Pancreas (tissue), 10 donors: ENCODE measurements at regions of chr13 and their contacts with region 1.

Region 1: GRCh38 chr13:44191504-44192171 is 182.0 kb upstream of the SERP2 start:
- DNase-seq: peak in 3 of 6 donors; percentile 40 to 67 (median 42)
- ATAC-seq: peak; percentile 96 to 99 (median 98)
- H3K4me3 ChIP-seq: no peak overlapping the region
- H3K27ac ChIP-seq: peak overlapping the region in 1 of 4 donors; percentile 22
- H3K4me1 ChIP-seq: peaks cover 0 to 3% (median 0%) of the 10 kb centered on the region in 3 donors
- H3K27me3 ChIP-seq: no peaks in the 10 kb centered on the region
- CTCF ChIP-seq: peak; percentile 40 to 72 (median 56)

Region 2: DNA sequence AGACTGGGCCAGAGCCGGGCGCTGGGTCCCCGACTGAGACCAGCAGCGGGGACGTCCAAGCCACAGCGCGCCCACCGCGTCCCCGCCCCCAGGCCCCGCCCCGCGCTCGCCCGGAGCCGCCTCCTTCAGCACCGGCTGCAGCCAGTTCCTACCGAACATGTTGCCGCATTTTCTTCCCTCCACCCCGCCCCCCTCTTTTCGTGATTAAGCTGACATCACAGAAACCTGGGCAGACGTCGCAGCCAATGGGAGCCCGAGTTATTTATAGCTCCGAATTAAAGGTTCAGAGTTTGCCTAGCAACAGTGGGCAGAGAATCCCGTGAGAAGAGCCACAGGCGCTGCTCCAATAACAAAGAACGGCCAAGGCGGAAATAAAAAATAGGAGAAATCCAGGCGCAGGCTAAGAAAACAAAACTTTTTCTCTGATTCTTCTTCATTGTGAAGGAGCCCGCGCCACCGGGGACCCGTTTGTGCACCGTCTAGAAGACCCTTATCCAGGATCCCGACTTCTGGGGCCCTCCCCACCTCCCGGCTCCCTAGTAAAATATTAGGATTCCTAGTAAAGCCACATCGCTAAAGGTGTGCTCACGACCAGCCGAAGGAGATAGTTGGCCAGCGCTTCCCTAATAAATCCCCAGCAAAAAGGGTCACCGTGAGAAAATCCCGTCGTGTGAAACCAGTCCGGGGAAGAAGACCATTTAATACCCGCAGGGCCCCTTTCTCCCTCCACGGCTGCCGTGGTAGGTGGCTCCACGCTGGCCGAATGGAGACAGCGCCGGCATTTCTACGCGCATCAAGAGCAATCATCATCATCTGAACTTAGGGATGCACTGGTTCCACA is 243.7 kb after region 1 on chr13:
- intact Hi-C with region 1: loop called in 1 of 3 experiments (anchors 10 kb)
- DNase-seq: peak; percentile 95 to 99 (median 97)
- ATAC-seq: peak; percentile 78 to 86 (median 84)
- H3K4me3 ChIP-seq: peak overlapping the region; percentile 45 to 77 (median 50)
- H3K27ac ChIP-seq: peak overlapping the region; percentile 85 to 99 (median 92)
- H3K4me1 ChIP-seq: peaks cover 10 to 36% (median 11%) of the 10 kb centered on the region in 3 donors
- H3K27me3 ChIP-seq: no peaks in the 10 kb centered on the region
- CTCF ChIP-seq: no peak